AG04449 (cell line): ENCODE measurements at regions of chr3 and their contacts with region 1.

Region 1: GRCh38 chr3:48157950-48158376 is 30.3 kb downstream of the CDC25A start:
- DNase-seq: peak; percentile 5
- H3K4me3 ChIP-seq: no peak overlapping the region
- CTCF ChIP-seq: peak; percentile 73

Region 2: DNA sequence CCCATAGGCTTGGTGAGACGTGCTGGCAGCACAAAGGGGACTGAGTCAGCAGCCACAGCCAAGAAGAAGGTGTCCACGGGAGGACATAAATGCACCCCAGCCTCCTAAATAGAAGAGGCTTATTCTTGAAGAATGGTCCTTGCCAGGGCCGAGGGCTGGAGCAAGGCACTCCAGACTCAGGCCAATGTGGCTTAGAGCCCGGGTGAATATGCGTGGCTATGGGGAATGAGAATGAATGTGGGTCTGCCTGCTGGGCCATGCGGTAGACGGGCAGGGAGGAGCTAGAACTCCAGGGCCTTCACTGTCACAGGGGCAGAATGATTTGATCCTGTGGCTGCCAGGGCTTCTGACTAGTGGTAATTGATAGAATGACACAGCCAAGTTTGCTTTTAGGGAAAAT is 321.0 kb before region 1 on chr3:
- CTCF ChIA-PET with region 1: interaction called, 72 read pairs
- POLR2A ChIA-PET with region 1: no interaction called
- DNase-seq: no peak
- H3K4me3 ChIP-seq: no peak overlapping the region
- CTCF ChIP-seq: no peak

Region 3: GRCh38 chr3:47849699-47850563 is 308.0 kb before region 1 on chr3:
- CTCF ChIA-PET with region 1: interaction called, 27 read pairs
- POLR2A ChIA-PET with region 1: no interaction called
- DNase-seq: no peak
- H3K4me3 ChIP-seq: no peak overlapping the region
- CTCF ChIP-seq: peak; percentile 39

Region 4: GRCh38 chr3:47865192-47865591 is 292.8 kb before region 1 on chr3:
- CTCF ChIA-PET with region 1: interaction called, 12 read pairs
- POLR2A ChIA-PET with region 1: no interaction called
- DNase-seq: no peak
- H3K4me3 ChIP-seq: no peak overlapping the region
- CTCF ChIP-seq: no peak

Region 5: DNA sequence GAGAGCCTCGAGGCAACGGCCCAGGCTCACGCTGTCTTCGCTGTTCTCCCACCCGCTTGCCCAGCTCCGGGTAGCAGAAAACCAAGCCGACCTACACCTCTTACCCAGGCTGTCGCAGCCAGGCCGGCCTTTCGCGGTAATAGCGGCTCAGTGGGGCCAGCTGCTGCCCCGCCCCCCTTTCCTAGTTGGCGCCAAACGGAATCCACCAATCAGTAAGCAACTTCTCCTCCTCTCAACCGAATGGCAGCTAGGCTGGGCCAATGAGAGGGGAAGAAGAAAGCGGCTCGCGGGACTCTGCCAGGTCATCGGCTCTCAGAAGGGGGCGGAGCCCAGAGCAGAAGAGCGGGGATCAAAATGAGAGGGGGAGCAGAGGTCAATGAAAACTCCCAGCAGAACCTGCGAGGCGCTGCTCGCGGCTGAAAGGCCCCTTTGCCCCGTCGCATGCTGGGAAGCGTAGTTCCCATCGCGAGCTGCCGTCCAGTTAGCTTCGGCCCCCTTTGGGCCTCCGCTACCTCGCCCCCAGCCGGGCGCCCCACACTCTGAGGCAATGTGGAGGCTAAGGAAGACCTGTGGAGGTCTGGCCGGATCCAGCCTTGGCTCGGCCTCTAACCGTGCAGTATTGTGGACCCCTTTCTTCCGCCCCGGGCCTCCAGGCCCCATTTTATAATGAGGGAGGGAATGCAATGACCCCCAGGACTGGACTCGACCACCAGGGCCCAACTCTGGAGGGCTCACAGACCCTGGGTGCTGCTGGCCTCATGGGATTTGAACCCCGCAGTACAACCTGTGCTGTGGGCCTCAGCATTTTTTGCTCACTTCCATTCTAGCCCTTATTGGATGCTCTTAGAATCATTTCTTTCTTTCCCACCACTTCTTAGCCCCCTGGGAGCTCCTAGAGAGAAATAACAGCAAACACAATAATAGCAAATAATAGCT is 30.6 kb after region 1 on chr3 and contains the start of gene CDC25A:
- CTCF ChIA-PET with region 1: interaction called, 18 read pairs
- POLR2A ChIA-PET with region 1: no interaction called
- DNase-seq: peak; percentile 83
- H3K4me3 ChIP-seq: peak within 1 kb of the TSS; percentile 92
- CTCF ChIP-seq: no peak

Region 6: DNA sequence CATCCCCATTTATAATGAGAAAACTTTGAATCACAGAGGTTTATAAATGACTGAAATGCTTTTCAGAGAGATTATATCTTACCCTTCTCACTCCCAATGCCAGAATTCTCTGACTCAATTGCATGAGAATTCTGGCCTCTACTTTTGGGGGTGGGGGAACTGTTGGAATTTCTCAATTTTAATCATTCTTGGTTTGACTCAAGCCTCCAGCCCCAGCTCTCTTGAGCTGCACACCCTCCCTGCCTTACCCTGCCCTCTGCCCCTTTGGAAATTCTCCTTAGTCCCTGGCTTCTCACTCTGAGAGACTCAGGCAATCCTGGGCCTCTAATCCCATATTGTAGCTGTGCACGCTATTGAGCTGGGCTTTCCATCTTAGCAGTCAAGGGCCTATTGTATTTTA is 127.2 kb after region 1 on chr3:
- CTCF ChIA-PET with region 1: no interaction called
- POLR2A ChIA-PET with region 1: no interaction called
- DNase-seq: peak; percentile 21
- H3K4me3 ChIP-seq: no peak overlapping the region
- CTCF ChIP-seq: no peak